ENCODE measurements at regions of chr2 and their contacts with region 1.

Region 1: DNA sequence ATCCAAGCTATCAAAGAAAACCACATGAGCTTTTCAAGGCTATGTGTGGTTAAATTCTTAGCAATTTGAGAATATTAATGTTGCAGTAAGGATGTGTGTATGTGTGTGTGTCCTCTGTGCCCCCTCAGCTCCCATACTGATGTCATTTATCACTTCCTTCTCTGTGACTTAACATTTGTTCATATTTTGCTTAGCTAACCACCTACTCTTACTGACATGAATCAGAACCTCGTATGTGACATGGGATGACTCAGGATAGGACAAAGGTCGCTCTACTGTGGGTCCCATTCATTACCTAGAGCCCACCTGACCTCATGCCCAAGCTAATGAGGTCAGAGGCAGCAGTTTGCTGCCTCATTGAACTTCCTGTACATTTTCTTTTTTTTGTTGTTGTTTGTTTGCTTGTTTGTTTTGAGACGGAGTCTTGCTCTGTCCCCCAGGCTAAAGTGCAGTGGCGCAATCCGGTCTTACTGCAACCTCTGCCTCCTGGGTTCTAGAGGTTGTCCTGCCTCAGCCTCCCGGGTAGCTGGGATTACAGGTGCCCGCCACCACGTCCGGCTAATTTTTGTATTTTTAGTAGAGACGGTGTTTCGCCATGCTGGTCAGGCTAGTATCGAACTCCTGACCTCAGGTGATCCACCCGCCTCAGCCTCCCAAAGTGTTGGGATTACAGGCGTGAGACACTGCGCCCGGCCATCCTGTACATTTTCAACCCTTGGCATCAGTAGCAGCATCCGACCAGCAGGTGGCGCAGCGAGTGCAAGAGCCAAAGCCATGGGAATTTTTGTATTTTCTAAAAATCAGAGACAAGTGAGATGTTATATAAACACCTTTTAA is 36.4 kb downstream of the MOGAT1 start:
- DNase-seq: peak; percentile 80
- H3K4me3 Mint-ChIP-seq: peak overlapping the region; percentile 45
- H3K27ac Mint-ChIP-seq: peak overlapping the region; percentile 63
- H3K4me1 Mint-ChIP-seq: peaks cover 33% of the 10 kb centered on the region
- H3K27me3 Mint-ChIP-seq: no peaks in the 10 kb centered on the region
- CTCF ChIP-seq: peak; percentile 93

Region 2: GRCh38 chr2:222641336-222641735 is 66.6 kb before region 1 on chr2:
- CTCF ChIA-PET with region 1: no interaction called
- intact Hi-C with region 1: no loop called
- DNase-seq: no peak
- H3K4me3 Mint-ChIP-seq: no peak overlapping the region
- H3K27ac Mint-ChIP-seq: no peak overlapping the region
- H3K4me1 Mint-ChIP-seq: peaks cover 32% of the 10 kb centered on the region
- H3K27me3 Mint-ChIP-seq: no peaks in the 10 kb centered on the region
- CTCF ChIP-seq: no peak

Region 3: GRCh38 chr2:222903234-222904220 is 195.6 kb after region 1 on chr2:
- CTCF ChIA-PET with region 1: interaction called, 4 read pairs
- intact Hi-C with region 1: loop called (anchors 1 kb)
- DNase-seq: peak; percentile 41
- H3K4me3 Mint-ChIP-seq: no peak overlapping the region
- H3K27ac Mint-ChIP-seq: no peak overlapping the region
- H3K4me1 Mint-ChIP-seq: peaks cover 89% of the 10 kb centered on the region
- H3K27me3 Mint-ChIP-seq: no peaks in the 10 kb centered on the region
- CTCF ChIP-seq: peak; percentile 46

Region 4: GRCh38 chr2:222939979-222940378 is 232.1 kb after region 1 on chr2:
- CTCF ChIA-PET with region 1: interaction called, 6 read pairs
- intact Hi-C with region 1: loop called (anchors 1 kb)
- DNase-seq: no peak
- H3K4me3 Mint-ChIP-seq: no peak overlapping the region
- H3K27ac Mint-ChIP-seq: no peak overlapping the region
- H3K4me1 Mint-ChIP-seq: peaks cover 29% of the 10 kb centered on the region
- H3K27me3 Mint-ChIP-seq: no peaks in the 10 kb centered on the region
- CTCF ChIP-seq: no peak

Region 5: DNA sequence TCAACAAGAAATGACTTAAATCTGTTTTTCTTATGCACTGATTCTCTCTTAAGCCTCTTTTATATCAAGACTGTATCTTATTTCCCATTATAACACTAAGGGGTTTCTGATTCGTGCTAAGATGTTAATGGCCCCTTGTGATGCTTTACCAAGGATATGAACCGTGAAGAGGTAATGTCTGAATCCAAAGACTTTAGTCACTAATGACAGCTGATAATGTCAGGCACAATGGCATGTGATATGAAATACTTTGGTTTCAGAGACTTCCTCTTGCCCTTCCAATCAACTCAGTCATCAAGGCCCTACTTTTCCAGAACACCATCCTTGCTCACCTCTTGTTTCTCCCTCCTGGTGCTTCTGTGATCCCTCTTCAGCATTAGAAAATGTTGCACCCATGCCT is 606.9 kb after region 1 on chr2:
- CTCF ChIA-PET with region 1: no interaction called
- intact Hi-C with region 1: no loop called
- DNase-seq: no peak
- H3K4me3 Mint-ChIP-seq: no peak overlapping the region
- H3K27ac Mint-ChIP-seq: no peak overlapping the region
- H3K4me1 Mint-ChIP-seq: no peaks in the 10 kb centered on the region
- H3K27me3 Mint-ChIP-seq: peaks cover 12% of the 10 kb centered on the region
- CTCF ChIP-seq: no peak